Left lung (tissue), 14 donors: ENCODE measurements at regions of chr5 and their contacts with region 1.

Region 1: DNA sequence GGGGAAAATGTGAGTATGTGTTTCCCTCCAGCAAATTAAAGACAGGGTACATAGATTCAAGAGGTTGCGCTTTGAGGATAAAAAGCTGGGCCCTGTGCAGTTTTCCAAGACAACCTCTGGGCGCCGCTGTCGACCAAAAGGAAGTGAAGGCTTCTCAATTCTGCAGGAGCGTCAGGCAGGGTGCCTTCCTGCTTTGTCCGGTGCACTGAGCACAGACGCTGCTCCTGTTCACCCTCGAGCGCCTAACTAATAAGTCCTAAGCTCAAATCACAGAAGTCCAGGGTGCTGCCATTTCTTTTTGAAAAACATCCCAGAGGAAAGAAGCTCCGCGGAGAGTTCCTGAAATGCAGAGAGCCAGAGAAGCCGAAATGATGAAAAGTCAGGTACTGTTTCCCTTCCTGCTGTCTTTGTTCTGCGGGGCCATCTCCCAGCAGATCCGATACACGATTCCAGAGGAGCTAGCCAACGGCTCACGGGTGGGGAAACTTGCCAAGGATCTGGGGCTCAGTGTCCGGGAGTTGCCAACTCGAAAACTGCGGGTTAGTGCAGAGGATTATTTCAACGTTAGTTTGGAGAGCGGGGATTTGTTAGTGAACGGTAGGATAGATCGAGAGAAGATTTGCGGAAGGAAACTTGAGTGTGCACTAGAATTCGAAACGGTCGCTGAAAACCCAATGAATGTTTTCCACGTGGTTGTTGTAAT is at the start of gene PCDHGB1:
- DNase-seq: no peak
- ATAC-seq: no peak
- H3K4me3 ChIP-seq: no peak within 1 kb of the TSS
- H3K27ac ChIP-seq: no peak within 1 kb of the TSS
- H3K4me1 ChIP-seq: no peaks in the 10 kb centered on the region
- H3K27me3 ChIP-seq: peaks cover 5 to 74% of the 10 kb centered on the region in 2 donors
- CTCF ChIP-seq: no peak
- polyA plus RNA-seq, gene PCDHGB1: 1.4 to 2.3 (median 1.7) TPM

Region 2: DNA sequence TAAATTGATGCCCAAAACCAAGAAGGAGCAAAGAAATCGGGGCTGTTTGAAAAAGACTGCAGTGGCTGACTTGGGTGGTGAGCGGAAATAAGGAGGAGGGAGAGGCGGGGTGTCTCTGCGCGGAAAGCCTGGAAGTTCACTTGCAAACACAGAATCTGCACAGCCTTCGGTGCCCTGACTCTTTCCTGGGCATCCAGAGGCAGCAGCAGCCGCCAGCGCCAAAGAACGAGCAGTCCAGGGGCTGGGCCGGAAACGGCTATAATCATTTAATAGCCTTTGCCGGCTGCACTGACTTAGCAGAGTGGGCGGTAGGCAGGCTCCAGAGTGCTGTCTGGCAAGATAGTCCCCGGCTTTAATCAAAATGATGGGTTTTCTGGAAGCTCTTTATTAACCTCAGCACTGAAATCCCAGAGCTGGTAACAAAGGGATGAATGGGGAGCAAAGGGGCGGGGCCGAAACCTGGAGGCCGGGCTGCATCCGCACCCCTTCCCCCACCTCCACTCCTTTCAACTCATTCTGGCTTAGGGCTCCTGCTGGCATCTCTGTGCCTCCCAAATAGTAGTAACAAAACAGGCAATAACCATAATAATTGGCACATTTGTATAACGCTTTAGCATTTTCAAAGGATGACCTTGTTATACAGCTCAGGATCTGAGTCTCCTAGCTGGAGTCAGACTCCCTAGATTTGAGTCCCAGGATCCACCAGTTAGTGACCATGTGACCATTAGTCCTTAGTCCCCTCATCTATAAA is 348.0 kb before region 1 on chr5:
- intact Hi-C with region 1: no loop called
- DNase-seq: peak in 3 of 4 donors; percentile 29 to 71 (median 32)
- ATAC-seq: peak; percentile 54
- H3K4me3 ChIP-seq: peak overlapping the region; percentile 30 to 32
- H3K27ac ChIP-seq: peak overlapping the region; percentile 63 to 69
- H3K4me1 ChIP-seq: peaks cover 0 to 9% of the 10 kb centered on the region in 2 donors
- H3K27me3 ChIP-seq: peaks cover 0 to 28% of the 10 kb centered on the region in 2 donors
- CTCF ChIP-seq: no peak

Region 3: DNA sequence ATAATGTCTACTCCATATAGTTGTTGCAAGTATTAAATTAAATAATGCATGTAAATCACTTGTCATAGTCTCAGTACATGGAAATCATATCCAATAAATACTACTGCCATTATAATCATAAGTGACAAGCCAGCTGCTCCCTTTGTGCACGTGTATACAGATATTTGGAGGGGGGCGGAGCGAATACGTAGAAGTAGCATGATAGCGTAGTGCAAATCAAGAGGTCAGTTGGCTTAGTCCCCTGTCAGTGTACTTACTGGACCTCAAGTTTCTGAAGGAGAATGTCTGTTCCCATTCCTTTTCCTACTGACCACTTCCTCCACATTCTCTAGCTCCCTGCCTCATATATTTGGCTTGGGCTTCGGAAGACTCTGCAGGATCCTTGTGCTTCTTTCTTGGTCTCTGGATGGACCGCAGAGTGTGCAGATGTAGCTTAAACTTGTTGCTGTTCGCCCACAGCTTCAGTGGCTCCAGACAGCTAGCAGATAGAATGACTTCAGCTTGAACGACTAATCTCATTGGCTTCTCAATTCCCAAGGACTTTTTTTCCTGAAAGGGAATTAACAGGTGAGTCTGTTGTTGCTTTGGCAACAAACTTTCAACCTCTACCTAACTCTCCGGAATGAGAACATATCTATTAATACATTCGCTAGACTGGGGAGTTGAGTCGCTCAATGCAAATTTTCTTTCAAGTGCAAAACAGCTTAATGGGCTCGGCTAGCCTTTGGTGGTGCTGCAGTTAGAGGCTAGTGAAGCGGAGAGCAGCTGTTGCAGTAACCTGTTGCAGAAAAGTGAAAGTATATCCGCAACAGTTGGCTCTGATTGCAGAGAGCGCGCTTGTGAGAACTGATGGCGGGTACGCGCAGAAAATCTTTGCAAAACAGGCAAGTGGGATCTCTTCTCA is 299.2 kb before region 1 on chr5 and contains the start of gene PCDHB1:
- intact Hi-C with region 1: no loop called
- DNase-seq: peak in 1 of 4 donors; percentile 5
- ATAC-seq: peak; percentile 87
- H3K4me3 ChIP-seq: peak within 1 kb of the TSS; percentile 32 to 41
- H3K27ac ChIP-seq: no peak within 1 kb of the TSS
- H3K4me1 ChIP-seq: no peaks in the 10 kb centered on the region
- H3K27me3 ChIP-seq: peaks cover 0 to 58% of the 10 kb centered on the region in 2 donors
- CTCF ChIP-seq: no peak
- polyA plus RNA-seq, gene PCDHB1: 0.06 to 0.14 (median 0.11) TPM

Region 4: DNA sequence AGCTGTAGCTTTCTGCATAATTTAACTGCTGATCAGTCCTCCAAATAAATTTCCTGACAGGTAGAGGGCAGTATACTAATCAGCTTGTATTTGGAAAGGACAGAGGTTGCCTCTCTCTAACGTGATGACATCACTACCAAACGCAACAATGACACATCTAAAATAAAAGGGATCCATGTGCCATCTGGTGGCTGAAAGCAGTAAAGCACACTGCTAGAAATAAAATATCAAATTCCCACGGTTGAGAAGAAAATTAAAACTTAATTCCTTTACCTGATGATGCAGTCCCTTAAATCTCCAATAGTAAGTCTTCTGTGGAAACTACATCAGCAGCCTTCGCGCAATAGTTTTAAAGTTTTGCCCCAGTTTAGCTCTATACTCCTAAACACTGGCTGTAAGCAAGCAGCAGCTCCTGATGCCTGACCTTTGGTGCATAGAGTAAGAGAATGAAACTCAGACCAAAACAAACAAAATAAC is 214.2 kb after region 1 on chr5:
- intact Hi-C with region 1: loop called in 1 of 2 experiments (anchors 10 kb)
- DNase-seq: peak in 2 of 4 donors; percentile 81 to 94
- ATAC-seq: peak; percentile 74
- H3K4me3 ChIP-seq: no peak overlapping the region
- H3K27ac ChIP-seq: peak overlapping the region in 1 of 2 donors; percentile 60
- H3K4me1 ChIP-seq: peaks cover 14 to 44% of the 10 kb centered on the region in 2 donors
- H3K27me3 ChIP-seq: no peaks in the 10 kb centered on the region
- CTCF ChIP-seq: peak; percentile 86 to 90